ENCODE measurements at regions of chr11 and their contacts with region 1.

Region 1: GRCh38 chr11:75241036-75241905 is 697 bp downstream of the TPBGL start:
- DNase-seq: peak; percentile 92
- ATAC-seq: peak; percentile 88
- H3K4me3 Mint-ChIP-seq: peak overlapping the region; percentile 59
- H3K27ac Mint-ChIP-seq: no peak overlapping the region
- H3K4me1 Mint-ChIP-seq: peaks cover 8% of the 10 kb centered on the region
- H3K27me3 Mint-ChIP-seq: peaks cover 23% of the 10 kb centered on the region

Region 2: GRCh38 chr11:74988541-74989260 is 252.6 kb before region 1 on chr11 and contains the start of gene NEU3:
- CTCF ChIA-PET with region 1: no interaction called
- POLR2A ChIA-PET with region 1: no interaction called
- intact Hi-C with region 1: loop called in 1 of 2 experiments (anchors 1 kb)
- DNase-seq: peak; percentile 91
- ATAC-seq: peak; percentile 97
- H3K4me3 Mint-ChIP-seq: peak within 1 kb of the TSS; percentile 85
- H3K27ac Mint-ChIP-seq: peak within 1 kb of the TSS; percentile 77
- H3K4me1 Mint-ChIP-seq: peaks cover 31% of the 10 kb centered on the region
- H3K27me3 Mint-ChIP-seq: no peaks in the 10 kb centered on the region
- total RNA-seq, gene NEU3: 12.0 to 13.9 TPM

Region 3: DNA sequence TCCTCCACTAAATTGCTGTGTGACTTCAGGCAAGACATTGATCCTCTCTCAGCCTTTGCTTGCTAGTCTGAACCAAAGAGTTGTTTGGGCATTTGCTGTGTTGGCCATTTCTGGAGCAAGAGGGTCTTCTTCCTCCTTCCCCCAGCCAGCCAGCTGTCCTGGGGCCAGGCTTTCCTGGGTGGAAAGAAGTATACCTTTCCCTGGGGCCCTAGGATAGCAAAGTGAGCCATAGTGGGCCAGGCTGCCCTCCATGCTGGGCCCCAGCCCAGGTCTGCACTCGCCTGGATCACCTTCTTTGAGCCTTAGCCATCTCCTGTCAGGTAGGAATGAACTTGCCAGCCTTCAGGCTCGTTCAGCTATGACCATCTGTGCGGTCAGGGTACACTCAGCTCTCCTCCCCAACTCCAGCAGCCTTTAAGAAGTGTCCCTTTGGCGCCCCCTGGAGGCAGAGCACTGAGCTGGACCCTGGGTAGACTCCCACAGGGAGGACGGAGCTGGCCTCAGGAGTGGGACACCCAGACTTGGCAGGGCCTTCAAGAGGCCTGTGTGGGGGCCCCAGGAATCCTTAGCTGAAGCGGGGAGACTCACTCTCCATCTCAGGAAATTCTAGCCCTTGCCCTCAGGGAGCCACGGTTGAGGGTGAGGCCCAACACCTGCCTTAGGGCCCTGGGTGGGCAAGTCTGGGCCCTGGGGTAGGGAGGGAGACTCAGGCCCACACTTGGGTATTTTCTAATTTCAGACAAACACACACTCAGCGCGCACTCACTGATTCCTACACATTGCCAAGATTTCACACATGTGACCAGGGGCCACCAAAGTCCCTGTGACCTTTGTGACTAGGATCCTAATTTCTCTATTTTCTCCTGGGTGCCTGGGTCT is 36.3 kb before region 1 on chr11:
- CTCF ChIA-PET with region 1: interaction called, 11 read pairs
- POLR2A ChIA-PET with region 1: no interaction called
- intact Hi-C with region 1: no loop called
- DNase-seq: peak; percentile 93
- ATAC-seq: peak; percentile 99
- H3K4me3 Mint-ChIP-seq: no peak overlapping the region
- H3K27ac Mint-ChIP-seq: no peak overlapping the region
- H3K4me1 Mint-ChIP-seq: no peaks in the 10 kb centered on the region
- H3K27me3 Mint-ChIP-seq: peaks cover 2% of the 10 kb centered on the region

Region 4: DNA sequence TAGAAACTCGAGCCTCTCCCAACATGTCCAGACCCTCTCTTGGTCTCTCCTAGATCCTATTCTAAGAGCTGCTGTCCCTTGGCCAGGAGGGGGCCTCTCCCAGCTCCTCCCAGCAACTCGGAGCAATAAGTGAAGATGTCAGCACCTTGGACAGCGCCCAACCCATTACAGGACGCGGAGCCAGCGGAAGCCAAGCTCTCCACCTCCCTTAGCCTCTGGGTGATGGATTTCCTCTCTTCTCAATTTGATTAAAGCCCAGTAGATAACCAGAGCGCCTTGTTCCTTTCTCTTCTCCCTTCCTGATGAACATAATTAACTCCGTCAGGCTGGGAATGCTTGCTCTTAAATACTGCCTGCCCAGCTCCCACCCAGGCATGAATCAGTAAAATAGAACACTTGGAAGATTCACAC is 26.9 kb before region 1 on chr11:
- CTCF ChIA-PET with region 1: interaction called, 9 read pairs
- POLR2A ChIA-PET with region 1: no interaction called
- intact Hi-C with region 1: loop called in 1 of 2 experiments (anchors 2 kb)
- DNase-seq: peak; percentile 90
- ATAC-seq: peak; percentile 71
- H3K4me3 Mint-ChIP-seq: no peak overlapping the region
- H3K27ac Mint-ChIP-seq: no peak overlapping the region
- H3K4me1 Mint-ChIP-seq: no peaks in the 10 kb centered on the region
- H3K27me3 Mint-ChIP-seq: peaks cover 28% of the 10 kb centered on the region

Region 5: GRCh38 chr11:75429902-75430719 is 188.8 kb after region 1 on chr11:
- CTCF ChIA-PET with region 1: interaction called, 3 read pairs
- POLR2A ChIA-PET with region 1: no interaction called
- intact Hi-C with region 1: loop called in 1 of 2 experiments (anchors 1 kb)
- DNase-seq: peak; percentile 77
- ATAC-seq: peak; percentile 65
- H3K4me3 Mint-ChIP-seq: peak overlapping the region; percentile 60
- H3K27ac Mint-ChIP-seq: no peak overlapping the region
- H3K4me1 Mint-ChIP-seq: peaks cover 16% of the 10 kb centered on the region
- H3K27me3 Mint-ChIP-seq: peaks cover 49% of the 10 kb centered on the region

Region 6: DNA sequence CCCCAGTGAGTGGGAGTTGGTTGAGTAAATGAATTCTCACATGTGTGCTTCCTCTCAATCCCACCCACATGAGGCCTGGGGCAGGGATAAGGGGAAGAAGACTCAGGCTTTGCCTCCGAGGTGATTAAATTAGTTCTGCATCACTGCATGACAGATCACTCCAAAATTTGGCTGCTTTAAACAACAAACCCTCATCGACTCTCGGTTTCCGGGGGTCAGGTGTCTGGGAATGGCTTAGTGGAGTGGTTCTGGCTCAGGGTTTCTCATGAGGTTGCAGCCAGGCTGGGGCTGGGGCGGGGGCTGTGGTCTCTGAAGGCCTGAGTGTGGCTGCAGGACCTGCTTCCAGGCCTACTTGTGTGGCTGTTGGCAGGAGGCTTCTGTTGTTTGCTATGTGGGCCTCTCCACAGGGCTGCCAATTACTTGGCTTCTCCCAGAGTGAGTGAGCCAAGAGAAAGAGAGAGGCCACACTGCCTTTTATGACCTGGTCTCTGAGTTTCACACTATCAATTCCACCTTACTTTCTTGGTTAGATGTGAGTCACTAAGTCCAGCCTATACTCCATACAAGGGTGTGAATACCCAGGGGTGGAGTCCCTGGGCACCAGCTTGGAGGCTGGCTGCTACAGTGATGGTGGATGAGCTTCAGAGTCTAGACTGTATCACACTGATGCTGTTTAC is 492.3 kb after region 1 on chr11:
- CTCF ChIA-PET with region 1: no interaction called
- POLR2A ChIA-PET with region 1: no interaction called
- intact Hi-C with region 1: no loop called
- DNase-seq: peak; percentile 17
- ATAC-seq: peak; percentile 94
- H3K4me3 Mint-ChIP-seq: no peak overlapping the region
- H3K27ac Mint-ChIP-seq: no peak overlapping the region
- H3K4me1 Mint-ChIP-seq: no peaks in the 10 kb centered on the region
- H3K27me3 Mint-ChIP-seq: no peaks in the 10 kb centered on the region

Measured in activated CD4-positive, alpha-beta T cell treated with anti-CD3 and anti-CD28 coated beads for 36 hours (primary cell).